AG04450 (cell line): ENCODE measurements at regions of chr5 and their contacts with region 1.

Region 1: GRCh38 chr5:124572971-124573370 is 173.5 kb downstream of the ZNF608 start:
- DNase-seq: no peak
- H3K4me3 ChIP-seq: no peak overlapping the region
- H3K27ac ChIP-seq: no peak overlapping the region
- H3K27me3 ChIP-seq: no peaks in the 10 kb centered on the region
- CTCF ChIP-seq: no peak

Region 2: DNA sequence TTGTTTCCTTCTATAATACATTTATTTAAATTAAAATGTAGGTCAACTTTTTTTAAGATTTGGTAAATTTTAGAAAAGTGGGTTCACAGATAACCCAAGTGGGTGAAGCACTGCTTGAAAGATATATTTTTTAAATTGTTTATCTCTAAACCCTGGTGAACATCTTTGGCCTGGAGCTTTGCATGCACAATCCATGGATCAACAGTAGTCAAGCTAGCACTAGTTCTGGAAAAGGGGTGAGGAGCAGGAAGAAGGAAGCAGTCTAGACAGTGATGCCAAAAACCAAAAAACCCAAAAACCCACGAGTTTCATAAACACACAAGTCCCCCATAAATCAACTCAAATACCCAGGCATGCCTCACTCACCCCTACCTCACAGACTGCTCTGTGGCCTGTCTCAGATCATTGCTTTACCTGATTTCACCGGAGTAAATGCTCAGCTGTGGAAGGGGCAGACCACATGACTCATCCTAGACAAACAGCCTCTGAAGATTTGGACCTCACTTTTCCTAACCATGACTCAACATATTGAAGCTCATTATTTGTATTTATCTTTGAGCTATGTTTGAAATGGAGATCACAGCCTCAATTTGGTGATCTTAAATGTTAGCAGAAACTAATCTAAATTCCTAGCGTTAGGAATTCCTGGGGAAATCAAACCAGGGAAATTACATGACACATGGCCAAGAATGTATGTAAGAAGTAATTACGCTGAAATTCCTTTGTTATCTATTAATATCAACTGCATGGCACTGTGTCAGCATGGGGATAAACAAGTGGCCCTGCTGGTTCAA is 23.8 kb after region 1 on chr5:
- CTCF ChIA-PET with region 1: no interaction called
- POLR2A ChIA-PET with region 1: no interaction called
- DNase-seq: peak; percentile 82
- H3K4me3 ChIP-seq: no peak overlapping the region
- H3K27ac ChIP-seq: no peak overlapping the region
- H3K27me3 ChIP-seq: no peaks in the 10 kb centered on the region
- CTCF ChIP-seq: no peak

Region 3: GRCh38 chr5:124935065-124935464 is 362.1 kb after region 1 on chr5:
- CTCF ChIA-PET with region 1: no interaction called
- POLR2A ChIA-PET with region 1: no interaction called
- DNase-seq: no peak
- H3K4me3 ChIP-seq: no peak overlapping the region
- H3K27ac ChIP-seq: no peak overlapping the region
- H3K27me3 ChIP-seq: no peaks in the 10 kb centered on the region
- CTCF ChIP-seq: no peak

Region 4: DNA sequence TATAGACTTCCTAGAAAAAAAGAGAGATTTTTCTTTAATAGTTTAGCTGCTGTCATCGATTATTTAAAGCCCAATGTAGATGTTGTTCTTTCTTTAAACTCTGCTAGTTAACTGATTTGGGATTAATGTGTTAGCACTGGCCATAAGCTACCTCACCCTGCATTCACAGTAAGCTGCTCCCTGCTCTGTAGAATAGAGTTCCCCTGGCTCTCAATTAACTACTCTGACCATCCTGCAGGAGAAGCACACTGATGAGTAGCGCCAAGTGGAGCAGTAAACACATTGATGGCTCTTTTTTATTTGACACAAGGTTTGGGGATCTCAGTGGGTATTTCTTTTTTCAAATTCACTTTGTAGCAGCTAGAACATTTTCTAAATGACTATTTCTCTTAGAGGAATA is 981.4 kb after region 1 on chr5:
- CTCF ChIA-PET with region 1: interaction called, 11 read pairs
- POLR2A ChIA-PET with region 1: no interaction called
- DNase-seq: no peak
- H3K4me3 ChIP-seq: no peak overlapping the region
- H3K27ac ChIP-seq: no peak overlapping the region
- H3K27me3 ChIP-seq: no peaks in the 10 kb centered on the region
- CTCF ChIP-seq: no peak